ENCODE measurements at regions of chr11 and their contacts with region 1.

Region 1: DNA sequence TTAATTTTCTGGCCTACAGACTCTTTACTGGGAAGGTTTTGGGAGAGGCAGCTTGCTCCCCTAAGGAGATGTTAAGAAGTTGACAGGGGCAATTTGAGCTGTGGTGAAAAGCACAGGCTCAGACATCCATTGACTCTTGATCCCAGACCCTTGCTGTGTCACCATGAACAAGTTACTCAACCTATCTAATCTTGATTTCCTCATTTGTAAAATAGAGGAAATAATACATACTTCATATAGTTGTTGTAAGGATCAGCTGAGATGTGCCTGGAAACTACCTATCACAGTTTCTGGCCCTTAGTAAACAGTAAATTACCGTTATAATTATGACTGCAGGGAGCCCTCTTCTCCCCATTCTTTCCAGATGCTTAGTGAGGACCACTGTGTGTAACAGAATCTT is 16.6 kb upstream of the SCGB1D4 start:
- DNase-seq: no peak
- H3K4me3 Mint-ChIP-seq: no peak overlapping the region
- H3K27ac Mint-ChIP-seq: no peak overlapping the region
- H3K4me1 Mint-ChIP-seq: peaks cover 13% of the 10 kb centered on the region
- H3K27me3 Mint-ChIP-seq: peaks cover 2% of the 10 kb centered on the region

Region 2: DNA sequence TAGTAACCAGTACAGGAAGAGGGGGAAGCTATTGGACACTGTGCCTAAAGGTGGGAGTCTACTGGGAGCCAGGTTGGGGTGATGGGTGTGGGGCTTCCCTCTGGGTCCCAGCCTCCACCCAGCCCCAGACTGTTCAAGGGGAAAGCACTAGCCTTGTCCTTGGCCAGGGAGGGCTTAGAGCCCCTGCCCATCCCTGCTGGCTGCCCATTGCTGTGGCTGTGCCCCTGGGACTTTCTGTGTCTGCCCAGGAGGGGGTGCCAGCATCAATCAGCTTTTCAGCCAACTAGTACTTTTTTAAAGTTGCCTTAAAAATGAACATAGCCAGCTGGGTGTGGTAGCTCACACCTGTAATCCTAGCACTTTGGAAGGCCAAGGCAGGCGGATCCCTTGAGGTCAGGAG is 171.7 kb before region 1 on chr11:
- CTCF ChIA-PET with region 1: no interaction called
- intact Hi-C with region 1: no loop called
- DNase-seq: no peak
- H3K4me3 Mint-ChIP-seq: no peak overlapping the region
- H3K27ac Mint-ChIP-seq: no peak overlapping the region
- H3K4me1 Mint-ChIP-seq: no peaks in the 10 kb centered on the region
- H3K27me3 Mint-ChIP-seq: no peaks in the 10 kb centered on the region

Region 3: GRCh38 chr11:62169091-62169847 is 146.2 kb before region 1 on chr11:
- CTCF ChIA-PET with region 1: interaction called, 14 read pairs
- intact Hi-C with region 1: loop called (anchors 1 kb)
- DNase-seq: no peak
- H3K4me3 Mint-ChIP-seq: no peak overlapping the region
- H3K27ac Mint-ChIP-seq: no peak overlapping the region
- H3K4me1 Mint-ChIP-seq: peaks cover 4% of the 10 kb centered on the region
- H3K27me3 Mint-ChIP-seq: peaks cover 19% of the 10 kb centered on the region

Region 4: GRCh38 chr11:62217191-62217748 is 98.2 kb before region 1 on chr11:
- CTCF ChIA-PET with region 1: interaction called, 7 read pairs
- intact Hi-C with region 1: loop called (anchors 1 kb)
- DNase-seq: peak; percentile 15
- H3K4me3 Mint-ChIP-seq: no peak overlapping the region
- H3K27ac Mint-ChIP-seq: no peak overlapping the region
- H3K4me1 Mint-ChIP-seq: no peaks in the 10 kb centered on the region
- H3K27me3 Mint-ChIP-seq: peaks cover 6% of the 10 kb centered on the region

Region 5: GRCh38 chr11:62233730-62234129 is 81.7 kb before region 1 on chr11:
- CTCF ChIA-PET with region 1: interaction called, 6 read pairs
- intact Hi-C with region 1: loop called (anchors 1 kb)
- DNase-seq: no peak
- H3K4me3 Mint-ChIP-seq: no peak overlapping the region
- H3K27ac Mint-ChIP-seq: no peak overlapping the region
- H3K4me1 Mint-ChIP-seq: no peaks in the 10 kb centered on the region
- H3K27me3 Mint-ChIP-seq: peaks cover 19% of the 10 kb centered on the region